AG04450 (cell line): ENCODE measurements at regions of chr7 and their contacts with region 1.

Region 1: GRCh38 chr7:23261843-23262452 is 15.4 kb downstream of the GPNMB start:
- DNase-seq: peak; percentile 33
- H3K4me3 ChIP-seq: no peak overlapping the region
- H3K27ac ChIP-seq: no peak overlapping the region
- H3K27me3 ChIP-seq: peaks cover 15% of the 10 kb centered on the region
- CTCF ChIP-seq: peak; percentile 96

Region 2: GRCh38 chr7:22751341-22751740 is 510.6 kb before region 1 on chr7:
- CTCF ChIA-PET with region 1: no interaction called
- POLR2A ChIA-PET with region 1: no interaction called
- DNase-seq: no peak
- H3K4me3 ChIP-seq: no peak overlapping the region
- H3K27ac ChIP-seq: no peak overlapping the region
- H3K27me3 ChIP-seq: no peaks in the 10 kb centered on the region
- CTCF ChIP-seq: no peak

Region 3: DNA sequence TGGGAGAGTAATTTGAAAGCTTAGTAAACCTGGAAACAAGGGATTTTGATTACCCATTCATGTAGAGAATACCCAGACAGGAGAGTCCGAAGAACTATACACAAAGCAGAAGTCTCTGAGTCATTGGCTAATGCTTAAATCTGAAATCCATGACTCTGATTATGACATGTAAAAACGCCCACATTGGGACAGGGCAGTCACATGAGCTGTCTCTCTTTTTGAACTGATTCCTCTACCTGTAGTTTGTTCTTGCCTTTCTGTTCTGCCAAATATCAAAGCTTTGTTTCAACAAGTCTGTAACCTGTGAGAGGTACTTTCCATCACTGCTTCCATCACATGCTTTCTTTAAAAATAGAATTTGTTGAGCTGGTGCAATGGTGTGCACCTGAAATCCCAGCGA is 19.6 kb before region 1 on chr7:
- CTCF ChIA-PET with region 1: interaction called, 13 read pairs
- POLR2A ChIA-PET with region 1: no interaction called
- DNase-seq: no peak
- H3K4me3 ChIP-seq: no peak overlapping the region
- H3K27ac ChIP-seq: no peak overlapping the region
- H3K27me3 ChIP-seq: peaks cover 15% of the 10 kb centered on the region
- CTCF ChIP-seq: no peak

Region 4: DNA sequence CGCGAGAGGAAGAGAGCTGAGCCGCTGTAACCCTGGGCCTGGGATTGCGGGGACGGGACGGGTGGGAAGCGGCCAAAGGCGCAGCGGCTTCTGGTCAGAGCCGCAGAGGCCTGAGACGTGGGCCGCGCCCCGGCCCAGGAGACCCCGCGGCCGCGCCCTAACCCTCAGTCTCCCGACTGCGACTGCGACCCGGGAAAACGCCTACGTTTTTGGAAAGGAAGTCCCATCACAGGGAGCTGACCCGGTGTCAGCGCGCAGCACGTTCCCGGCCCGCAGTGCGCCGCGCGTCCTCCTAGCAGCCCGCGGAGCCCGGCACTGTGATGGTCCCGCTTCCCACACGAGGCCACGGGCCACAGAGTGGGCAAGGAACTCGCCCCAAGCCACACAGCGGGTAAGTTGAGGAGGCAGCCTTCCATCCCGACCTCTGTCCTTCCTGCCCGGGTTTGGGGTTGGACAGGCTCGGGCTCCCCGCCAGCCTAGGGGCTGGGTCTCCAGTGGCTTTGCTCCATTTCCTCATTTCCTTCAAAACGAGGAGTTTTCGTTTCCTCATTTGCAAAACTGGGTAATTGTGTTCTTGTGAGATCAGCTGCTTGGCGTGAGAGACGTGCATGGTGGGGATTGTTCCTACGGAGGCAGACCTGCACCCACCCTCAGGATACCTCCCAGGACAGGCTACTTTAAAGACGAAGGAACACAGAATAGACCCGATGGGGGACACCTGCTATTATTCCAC is 14.2 kb before region 1 on chr7:
- CTCF ChIA-PET with region 1: interaction called, 13 read pairs
- POLR2A ChIA-PET with region 1: no interaction called
- DNase-seq: no peak
- H3K4me3 ChIP-seq: peak overlapping the region; percentile 38
- H3K27ac ChIP-seq: no peak overlapping the region
- H3K27me3 ChIP-seq: peaks cover 47% of the 10 kb centered on the region
- CTCF ChIP-seq: no peak